ENCODE measurements at regions of chr4 and their contacts with region 1.

Region 1: GRCh38 chr4:75916091-75916661 is 13.9 kb upstream of the PPEF2 start:
- DNase-seq: peak; percentile 50
- ATAC-seq: peak; percentile 76
- H3K4me3 Mint-ChIP-seq: no peak overlapping the region
- H3K27ac Mint-ChIP-seq: no peak overlapping the region
- H3K4me1 Mint-ChIP-seq: peaks cover 2% of the 10 kb centered on the region
- H3K27me3 Mint-ChIP-seq: no peaks in the 10 kb centered on the region

Region 2: DNA sequence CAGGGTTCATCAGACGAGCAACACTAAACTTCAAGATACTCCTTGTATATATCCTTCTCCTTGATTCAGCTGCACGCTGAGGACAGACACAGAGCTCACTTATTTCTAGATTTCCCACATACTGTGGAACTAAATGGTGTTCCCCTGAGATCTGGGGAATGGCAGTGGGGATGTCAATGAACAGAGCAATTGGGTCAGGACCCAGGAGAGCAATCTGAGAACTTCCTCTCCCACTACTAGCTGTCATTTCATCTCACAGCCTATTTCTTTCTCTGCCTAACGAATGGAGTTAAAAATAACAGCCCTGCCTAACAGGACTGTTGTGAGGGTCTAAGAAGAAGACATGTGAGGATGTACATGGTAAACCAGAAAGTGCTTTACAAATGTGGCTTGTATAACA is 14.0 kb after region 1 on chr4:
- CTCF ChIA-PET with region 1: interaction called, 10 read pairs
- POLR2A ChIA-PET with region 1: no interaction called
- DNase-seq: no peak
- ATAC-seq: no peak
- H3K4me3 Mint-ChIP-seq: no peak overlapping the region
- H3K27ac Mint-ChIP-seq: no peak overlapping the region
- H3K4me1 Mint-ChIP-seq: no peaks in the 10 kb centered on the region
- H3K27me3 Mint-ChIP-seq: no peaks in the 10 kb centered on the region